Activated CD8-positive, alpha-beta T cell treated with anti-CD3 and anti-CD28 coated beads for 36 hours (primary cell): ENCODE measurements at regions of chr16 and their contacts with region 1.

Region 1: GRCh38 chr16:21584817-21585216 is 14.6 kb upstream of the METTL9 start:
- DNase-seq: no peak
- ATAC-seq: no peak
- H3K4me3 Mint-ChIP-seq: no peak overlapping the region
- H3K27ac Mint-ChIP-seq: no peak overlapping the region
- H3K4me1 Mint-ChIP-seq: peaks cover 2% of the 10 kb centered on the region
- H3K27me3 Mint-ChIP-seq: no peaks in the 10 kb centered on the region
- CTCF ChIP-seq: no peak

Region 2: DNA sequence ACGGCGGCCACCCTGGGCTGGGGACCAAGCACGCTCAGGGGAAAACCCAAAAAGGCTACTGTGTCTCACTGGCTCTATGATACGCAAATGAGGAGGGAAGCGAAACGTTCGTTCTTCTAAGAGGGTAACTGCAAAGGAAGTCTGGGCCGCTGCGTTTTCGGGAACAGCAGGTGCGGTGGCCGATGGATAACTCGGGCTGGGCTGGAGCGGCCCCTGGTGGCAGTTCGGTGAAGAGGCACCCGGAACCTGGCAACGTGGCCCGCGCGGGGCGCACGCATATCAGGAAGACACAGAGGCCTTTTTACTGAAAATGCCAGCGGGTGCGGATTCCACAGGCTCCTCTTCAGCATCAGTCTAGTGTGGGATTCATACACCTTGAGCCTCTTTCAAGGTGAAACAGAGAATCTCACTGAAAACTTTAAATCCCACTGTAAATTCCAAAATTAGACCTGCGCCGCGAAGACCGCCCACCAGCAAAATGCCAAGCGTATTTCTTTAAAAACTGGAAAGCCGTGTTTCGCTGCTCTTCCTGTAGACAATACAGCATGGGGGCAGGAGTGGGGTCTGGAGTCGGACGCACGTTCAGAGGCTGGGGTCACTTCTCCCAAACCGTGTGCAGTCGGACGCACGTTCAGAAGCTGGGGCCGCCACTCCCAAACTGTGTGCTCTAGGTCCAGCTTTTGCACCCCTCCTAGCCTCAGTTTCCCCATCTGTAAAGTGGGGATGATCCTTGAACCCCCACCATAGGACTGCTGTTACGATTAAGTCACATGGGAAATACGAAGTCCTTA is 29.8 kb before region 1 on chr16:
- CTCF ChIA-PET with region 1: no interaction called
- POLR2A ChIA-PET with region 1: no interaction called
- intact Hi-C with region 1: no loop called
- DNase-seq: peak; percentile 98
- ATAC-seq: peak; percentile 97
- H3K4me3 Mint-ChIP-seq: peak overlapping the region; percentile 50
- H3K27ac Mint-ChIP-seq: peak overlapping the region; percentile 82
- H3K4me1 Mint-ChIP-seq: peaks cover 15% of the 10 kb centered on the region
- H3K27me3 Mint-ChIP-seq: peaks cover 11% of the 10 kb centered on the region
- CTCF ChIP-seq: peak; percentile 100

Region 3: GRCh38 chr16:21638573-21638975 is 53.8 kb after region 1 on chr16:
- CTCF ChIA-PET with region 1: interaction called, 61 read pairs
- POLR2A ChIA-PET with region 1: interaction called, 3 read pairs
- intact Hi-C with region 1: no loop called
- DNase-seq: peak; percentile 54
- ATAC-seq: peak; percentile 88
- H3K4me3 Mint-ChIP-seq: no peak overlapping the region
- H3K27ac Mint-ChIP-seq: peak overlapping the region; percentile 82
- H3K4me1 Mint-ChIP-seq: peaks cover 45% of the 10 kb centered on the region
- H3K27me3 Mint-ChIP-seq: no peaks in the 10 kb centered on the region
- CTCF ChIP-seq: no peak

Region 4: DNA sequence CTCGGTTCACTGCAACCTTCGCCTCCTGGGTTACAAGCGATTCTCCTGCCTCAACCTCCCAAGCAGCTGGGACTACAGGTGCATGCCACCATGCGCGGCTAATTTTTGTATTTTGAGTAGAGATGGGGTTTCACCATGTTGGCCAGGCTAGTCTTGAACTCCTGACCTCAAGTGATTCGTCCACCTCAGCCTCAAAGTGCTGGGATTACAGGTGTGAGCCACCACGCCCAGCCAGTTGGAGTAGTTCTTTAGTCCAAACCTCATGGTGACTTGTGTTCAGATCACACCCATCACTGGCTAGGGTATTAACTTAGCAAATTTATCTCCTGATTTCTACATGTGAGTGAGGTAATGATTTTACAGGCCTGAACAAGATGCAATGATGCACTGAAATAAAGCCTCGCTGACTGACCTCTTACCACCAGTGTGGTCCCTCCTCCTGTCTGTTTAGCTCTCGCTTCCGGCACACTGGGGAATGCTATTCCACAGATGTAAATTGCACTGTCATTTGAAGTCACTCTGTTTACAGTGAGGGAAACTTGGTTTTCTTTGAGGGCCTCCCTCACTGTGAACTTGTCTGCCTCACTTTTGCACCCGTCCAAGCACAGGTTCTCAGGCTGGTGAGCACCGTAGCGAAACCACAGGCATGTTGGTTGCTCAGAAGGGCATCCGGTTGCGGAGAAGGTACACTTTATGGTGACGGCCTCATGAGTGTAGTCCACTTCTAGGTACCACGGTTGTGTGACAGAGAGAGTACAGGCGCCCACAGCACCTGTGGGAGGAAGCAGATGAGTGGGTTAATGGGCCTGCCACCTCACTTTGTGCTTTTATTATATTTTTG is 62.1 kb after region 1 on chr16:
- CTCF ChIA-PET with region 1: interaction called, 7 read pairs
- POLR2A ChIA-PET with region 1: interaction called, 5 read pairs
- intact Hi-C with region 1: loop called (anchors 2 kb)
- DNase-seq: peak; percentile 93
- ATAC-seq: peak; percentile 91
- H3K4me3 Mint-ChIP-seq: peak overlapping the region; percentile 61
- H3K27ac Mint-ChIP-seq: peak overlapping the region; percentile 93
- H3K4me1 Mint-ChIP-seq: peaks cover 52% of the 10 kb centered on the region
- H3K27me3 Mint-ChIP-seq: no peaks in the 10 kb centered on the region
- CTCF ChIP-seq: no peak